ENCODE measurements at regions of chr20 and their contacts with region 1.

Region 1: DNA sequence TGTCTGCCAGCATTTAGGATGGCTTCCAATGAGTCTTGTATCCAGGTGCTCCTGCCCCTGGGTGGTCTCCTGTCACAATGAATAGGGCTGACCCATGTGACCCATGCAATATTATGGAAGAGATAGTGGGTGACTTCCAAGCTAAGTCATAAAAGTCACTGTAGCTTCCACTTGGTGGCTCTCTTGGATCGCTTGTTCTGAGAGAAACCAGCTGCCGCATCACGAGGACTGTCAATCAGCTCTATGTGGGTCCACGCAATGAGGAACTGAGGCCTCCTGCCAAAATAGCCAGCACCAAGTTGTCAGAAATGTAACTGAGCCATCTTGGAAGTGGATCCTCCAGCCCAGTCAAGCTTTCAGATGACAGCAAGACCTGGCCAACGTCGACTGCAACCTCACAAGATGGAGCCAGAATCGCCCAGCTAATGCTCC is 14.9 kb upstream of the MATN4 start:
- DNase-seq: peak; percentile 75
- H3K4me3 ChIP-seq: no peak overlapping the region
- H3K27ac ChIP-seq: no peak overlapping the region
- H3K4me1 ChIP-seq: no peaks in the 10 kb centered on the region
- H3K27me3 ChIP-seq: no peaks in the 10 kb centered on the region
- CTCF ChIP-seq: peak in 1 of 3 experiments; percentile 16
- POLR2A ChIP-seq: no peak

Region 2: DNA sequence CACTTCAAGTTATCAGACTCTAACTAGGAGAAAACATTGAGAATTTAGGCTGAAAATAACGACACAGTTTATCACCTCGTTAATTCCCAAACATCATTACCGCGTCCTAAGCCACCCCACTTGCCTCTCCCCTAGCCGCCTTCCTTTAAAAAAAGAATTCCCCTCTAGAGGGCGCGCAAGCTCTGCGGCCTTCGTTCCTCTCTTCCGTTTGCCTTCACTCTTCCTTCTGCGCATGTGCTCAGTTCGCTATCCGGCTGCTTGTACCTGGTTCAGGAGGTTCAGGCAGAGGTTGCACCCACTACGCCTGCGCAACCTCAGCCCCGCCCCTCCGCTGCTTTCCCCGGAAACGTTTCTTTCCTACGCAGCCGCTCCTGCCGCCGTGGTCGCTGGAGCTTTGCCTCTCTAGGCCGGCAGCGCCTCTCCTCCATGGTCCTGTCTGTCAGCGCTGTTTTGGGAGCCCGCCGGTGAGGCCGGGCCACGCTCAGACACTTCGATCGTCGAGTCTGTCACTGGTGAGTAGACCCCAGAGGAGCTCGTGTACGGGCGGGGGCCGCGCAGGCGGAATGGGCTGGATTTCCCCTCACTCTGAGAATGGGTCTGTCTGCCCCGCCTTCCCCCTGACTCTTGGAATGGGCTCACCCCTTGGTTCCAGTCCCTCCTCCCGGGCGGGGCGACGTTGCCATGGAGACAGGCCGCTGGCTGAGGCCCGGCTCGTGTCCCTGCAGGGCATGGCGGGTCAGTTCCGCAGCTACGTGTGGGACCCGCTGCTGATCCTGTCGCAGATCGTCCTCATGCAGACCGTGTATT is 40.0 kb after region 1 on chr20 and contains the start of gene SYS1:
- intact Hi-C with region 1: loop called (anchors 2 kb)
- DNase-seq: peak; percentile 98
- H3K4me3 ChIP-seq: peak within 1 kb of the TSS; percentile 59 to 77
- H3K27ac ChIP-seq: peak within 1 kb of the TSS; percentile 83 to 86
- H3K4me1 ChIP-seq: peaks cover 24% of the 10 kb centered on the region
- H3K27me3 ChIP-seq: no peaks in the 10 kb centered on the region
- CTCF ChIP-seq: peak; percentile 88 to 97 (median 91)
- POLR2A ChIP-seq: no peak
- total RNA-seq, gene SYS1: 33.1 to 34.6 TPM

Region 3: DNA sequence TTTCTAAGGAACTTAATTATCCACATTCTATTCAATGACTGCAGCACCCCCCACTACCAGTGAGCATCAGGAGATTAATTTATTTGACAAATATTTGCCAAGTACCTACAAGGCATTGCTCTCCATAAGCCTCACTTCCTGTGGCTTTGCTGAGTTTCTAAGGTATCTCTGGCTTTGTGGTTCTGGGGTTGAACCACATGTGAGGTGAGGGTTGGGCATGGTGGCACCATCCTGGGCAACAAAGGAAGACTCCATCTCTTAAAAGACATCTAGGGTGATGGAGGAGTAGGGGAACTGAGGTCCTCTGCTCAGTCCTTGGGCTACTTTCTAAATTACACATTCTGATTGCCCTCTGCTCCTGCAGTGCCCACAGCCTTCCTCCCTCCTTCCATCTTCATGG is 121.1 kb after region 1 on chr20:
- intact Hi-C with region 1: loop called (anchors 5 kb)
- DNase-seq: no peak
- H3K4me3 ChIP-seq: no peak overlapping the region
- H3K27ac ChIP-seq: no peak overlapping the region
- H3K4me1 ChIP-seq: no peaks in the 10 kb centered on the region
- H3K27me3 ChIP-seq: no peaks in the 10 kb centered on the region
- CTCF ChIP-seq: no peak
- POLR2A ChIP-seq: no peak

Region 4: GRCh38 chr20:45963059-45964005 is 640.4 kb after region 1 on chr20:
- intact Hi-C with region 1: no loop called
- DNase-seq: no peak
- H3K4me3 ChIP-seq: no peak overlapping the region
- H3K27ac ChIP-seq: no peak overlapping the region
- H3K4me1 ChIP-seq: no peaks in the 10 kb centered on the region
- H3K27me3 ChIP-seq: no peaks in the 10 kb centered on the region
- CTCF ChIP-seq: peak in 2 of 3 experiments; percentile 24 to 38
- POLR2A ChIP-seq: no peak